ENCODE measurements at regions of chrX and their contacts with region 1.

Region 1: DNA sequence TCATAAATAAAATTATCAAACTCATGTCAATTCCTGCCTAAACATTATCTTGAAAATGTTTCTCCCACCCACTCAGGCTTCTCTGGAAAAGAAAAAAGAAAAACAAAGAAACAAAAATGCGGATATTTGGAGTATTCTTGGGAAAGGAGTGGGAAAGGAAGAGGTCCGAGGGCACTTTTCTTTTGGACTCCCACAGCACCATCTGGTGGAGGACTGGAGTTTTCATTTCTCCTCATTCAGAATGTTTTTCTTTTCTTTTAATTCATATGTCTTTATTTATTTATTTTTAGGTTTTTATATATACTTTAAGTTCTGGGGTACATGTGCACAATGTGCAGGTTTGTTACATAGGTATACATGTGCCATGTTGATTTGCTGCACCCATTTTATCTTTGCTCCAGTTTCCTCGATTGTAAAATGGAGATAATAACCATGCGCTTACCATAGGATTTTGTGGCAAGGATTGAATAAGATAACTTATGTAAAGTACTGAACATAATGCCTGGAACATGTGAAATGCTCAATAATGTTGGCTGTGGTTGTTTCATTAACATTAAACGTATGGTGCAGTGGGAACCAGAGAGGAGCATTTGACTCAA is 8.0 kb upstream of the KCNE5 start:
- DNase-seq: peak in 1 of 14 experiments; percentile 2
- ATAC-seq: no peak
- H3K4me3 ChIP-seq: no peak overlapping the region
- H3K4me3 Mint-ChIP-seq: no peak overlapping the region
- H3K27ac ChIP-seq: no peak overlapping the region
- H3K27ac Mint-ChIP-seq: no peak overlapping the region
- H3K4me1 ChIP-seq: no peaks in the 10 kb centered on the region
- H3K4me1 Mint-ChIP-seq: no peaks in the 10 kb centered on the region
- H3K27me3 ChIP-seq: no peaks in the 10 kb centered on the region
- H3K27me3 Mint-ChIP-seq: no peaks in the 10 kb centered on the region
- CTCF ChIP-seq: no peak

Region 2: GRCh38 chrX:109485470-109486340 is 147.3 kb before region 1 on chrX:
- CTCF ChIA-PET with region 1: interaction called, 7 read pairs
- POLR2A ChIA-PET with region 1: no interaction called
- intact Hi-C with region 1: loop called (anchors 5 kb)
- DNase-seq: peak; percentile 19 to 78 (median 43)
- ATAC-seq: peak; percentile 78
- H3K4me3 ChIP-seq: no peak overlapping the region
- H3K4me3 Mint-ChIP-seq: no peak overlapping the region
- H3K27ac ChIP-seq: no peak overlapping the region
- H3K27ac Mint-ChIP-seq: no peak overlapping the region
- H3K4me1 ChIP-seq: no peaks in the 10 kb centered on the region
- H3K4me1 Mint-ChIP-seq: no peaks in the 10 kb centered on the region
- H3K27me3 ChIP-seq: peaks cover 0 to 3% of the 10 kb centered on the region in 2 experiments
- H3K27me3 Mint-ChIP-seq: no peaks in the 10 kb centered on the region
- CTCF ChIP-seq: peak; percentile 94

Region 3: DNA sequence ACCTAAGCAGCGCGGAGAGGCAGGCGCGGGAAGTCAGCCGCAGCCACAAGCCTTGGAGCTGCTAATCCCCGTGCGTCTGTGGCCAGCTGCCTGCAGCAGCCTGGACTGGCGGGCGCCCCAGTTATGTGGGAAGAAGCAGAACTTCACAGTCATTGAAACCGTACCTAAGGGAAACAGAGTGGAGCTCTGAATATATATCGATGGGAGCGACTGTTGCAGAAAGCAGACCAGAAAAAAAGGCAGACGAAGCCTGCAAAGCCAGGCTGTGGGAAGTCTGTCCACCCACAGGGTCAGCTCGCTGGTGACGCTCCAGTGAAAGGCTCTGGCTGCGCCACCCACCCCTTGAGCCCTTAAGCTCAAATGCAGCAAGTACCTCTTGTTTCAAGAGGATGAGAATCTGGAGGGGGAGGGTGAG is 32.8 kb before region 1 on chrX:
- CTCF ChIA-PET with region 1: no interaction called
- POLR2A ChIA-PET with region 1: no interaction called
- intact Hi-C with region 1: no loop called
- DNase-seq: no peak
- ATAC-seq: no peak
- H3K4me3 ChIP-seq: no peak overlapping the region
- H3K4me3 Mint-ChIP-seq: no peak overlapping the region
- H3K27ac ChIP-seq: no peak overlapping the region
- H3K27ac Mint-ChIP-seq: no peak overlapping the region
- H3K4me1 ChIP-seq: no peaks in the 10 kb centered on the region
- H3K4me1 Mint-ChIP-seq: no peaks in the 10 kb centered on the region
- H3K27me3 ChIP-seq: peaks cover 0 to 4% of the 10 kb centered on the region in 2 experiments
- H3K27me3 Mint-ChIP-seq: peaks cover 42% of the 10 kb centered on the region
- CTCF ChIP-seq: no peak

Measured in CD4-positive, alpha-beta T cell (primary cell).